Caco-2 (cell line): ENCODE measurements at regions of chr1 and their contacts with region 1.

Region 1: DNA sequence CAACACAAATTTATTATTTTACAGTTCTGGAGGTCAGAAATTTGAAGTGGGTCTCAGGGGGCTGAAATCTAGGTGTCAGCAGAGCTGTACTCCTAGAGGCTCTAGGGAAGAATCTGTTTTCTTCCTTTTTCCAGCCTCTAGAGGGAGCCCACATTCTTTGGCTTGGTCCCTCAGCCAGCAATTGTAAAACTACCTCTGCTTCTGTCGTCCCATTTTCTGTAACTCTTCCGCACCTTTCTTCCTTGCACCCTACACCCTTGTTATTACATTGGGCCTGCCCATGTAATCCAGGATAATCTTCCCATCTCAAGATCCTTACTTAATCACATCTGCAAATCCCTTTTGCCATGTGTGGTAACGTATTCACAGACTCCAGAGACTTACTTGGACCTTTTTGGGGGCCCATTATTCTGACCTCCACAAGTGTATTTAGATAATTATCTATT is 24.8 kb upstream of the THEM4 start:
- DNase-seq: peak; percentile 48 to 78
- H3K4me3 ChIP-seq: no peak overlapping the region
- H3K4me3 Mint-ChIP-seq: no peak overlapping the region
- H3K27ac Mint-ChIP-seq: peak overlapping the region; percentile 63
- H3K4me1 ChIP-seq: peaks cover 32% of the 10 kb centered on the region
- H3K4me1 Mint-ChIP-seq: peaks cover 34% of the 10 kb centered on the region
- H3K27me3 ChIP-seq: no peaks in the 10 kb centered on the region
- H3K27me3 Mint-ChIP-seq: no peaks in the 10 kb centered on the region
- CTCF ChIP-seq: peak; percentile 85 to 87

Region 2: DNA sequence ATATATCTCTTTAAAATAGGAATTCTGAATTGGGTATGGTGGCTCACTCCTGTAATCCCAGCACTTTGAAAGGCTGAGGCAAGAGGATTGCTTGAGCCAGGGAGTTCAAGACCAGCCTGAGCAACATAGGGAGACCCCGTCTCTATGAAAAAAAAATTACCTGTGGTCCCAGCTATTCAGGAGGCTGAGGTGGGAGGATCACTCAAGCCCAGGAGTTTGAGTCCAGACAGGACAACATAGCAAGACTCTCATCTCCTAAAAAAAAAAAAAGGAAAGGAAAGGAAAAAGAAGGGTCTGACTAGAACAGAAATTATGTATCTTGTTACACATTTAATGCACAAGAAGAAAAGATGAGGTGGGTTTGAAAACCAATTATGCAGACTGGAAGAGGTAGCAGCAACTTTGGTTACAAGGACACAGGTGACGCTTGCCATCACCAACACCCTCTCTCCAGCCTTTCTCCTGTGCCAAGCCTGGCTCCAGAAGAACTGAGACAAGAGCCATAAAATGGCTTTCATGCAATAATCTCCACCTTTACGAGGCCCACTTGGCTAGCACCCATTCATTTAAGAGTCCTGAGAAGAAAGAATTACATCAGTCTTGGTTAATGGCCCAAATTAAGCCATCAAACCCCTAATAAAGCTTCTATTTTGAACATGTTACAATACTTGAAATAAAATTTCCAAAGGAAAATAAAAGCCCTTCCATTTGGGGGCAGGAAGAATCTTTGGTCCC is 556.8 kb before region 1 on chr1:
- CTCF ChIA-PET with region 1: no interaction called
- POLR2A ChIA-PET with region 1: no interaction called
- intact Hi-C with region 1: no loop called
- DNase-seq: no peak
- H3K4me3 ChIP-seq: no peak overlapping the region
- H3K4me3 Mint-ChIP-seq: no peak overlapping the region
- H3K27ac Mint-ChIP-seq: no peak overlapping the region
- H3K4me1 ChIP-seq: peaks cover 8% of the 10 kb centered on the region
- H3K4me1 Mint-ChIP-seq: peaks cover 11% of the 10 kb centered on the region
- H3K27me3 ChIP-seq: no peaks in the 10 kb centered on the region
- H3K27me3 Mint-ChIP-seq: no peaks in the 10 kb centered on the region
- CTCF ChIP-seq: no peak

Region 3: GRCh38 chr1:151888972-151889570 is 45.0 kb before region 1 on chr1:
- CTCF ChIA-PET with region 1: interaction called, 6 read pairs
- POLR2A ChIA-PET with region 1: no interaction called
- intact Hi-C with region 1: loop called (anchors 10 kb)
- DNase-seq: peak in 1 of 2 experiments; percentile 20
- H3K4me3 ChIP-seq: no peak overlapping the region
- H3K4me3 Mint-ChIP-seq: no peak overlapping the region
- H3K27ac Mint-ChIP-seq: no peak overlapping the region
- H3K4me1 ChIP-seq: no peaks in the 10 kb centered on the region
- H3K4me1 Mint-ChIP-seq: peaks cover 6% of the 10 kb centered on the region
- H3K27me3 ChIP-seq: no peaks in the 10 kb centered on the region
- H3K27me3 Mint-ChIP-seq: no peaks in the 10 kb centered on the region
- CTCF ChIP-seq: peak; percentile 38 to 53

Region 4: GRCh38 chr1:152013664-152014237 is 79.7 kb after region 1 on chr1:
- CTCF ChIA-PET with region 1: interaction called, 12 read pairs
- POLR2A ChIA-PET with region 1: no interaction called
- intact Hi-C with region 1: loop called (anchors 1 kb)
- DNase-seq: peak; percentile 68 to 69
- H3K4me3 ChIP-seq: no peak overlapping the region
- H3K4me3 Mint-ChIP-seq: no peak overlapping the region
- H3K27ac Mint-ChIP-seq: no peak overlapping the region
- H3K4me1 ChIP-seq: 0 out of 2 replicates have a peak, but pooled peaks cover 3% of the 10 kb centered on the region
- H3K4me1 Mint-ChIP-seq: peaks cover 7% of the 10 kb centered on the region
- H3K27me3 ChIP-seq: no peaks in the 10 kb centered on the region
- H3K27me3 Mint-ChIP-seq: no peaks in the 10 kb centered on the region
- CTCF ChIP-seq: peak; percentile 76 to 86